Right cardiac atrium (tissue), 5 donors: ENCODE measurements at regions of chr1 and their contacts with region 1.

Region 1: GRCh38 chr1:114002492-114003239 is 23.4 kb downstream of the OLFML3 start:
- DNase-seq: peak; percentile 39 to 63 (median 55)
- ATAC-seq: peak; percentile 78 to 79
- H3K4me3 ChIP-seq: no peak overlapping the region
- H3K27ac ChIP-seq: no peak overlapping the region
- H3K4me1 ChIP-seq: peaks cover 2% of the 10 kb centered on the region
- H3K27me3 ChIP-seq: no peaks in the 10 kb centered on the region

Region 2: DNA sequence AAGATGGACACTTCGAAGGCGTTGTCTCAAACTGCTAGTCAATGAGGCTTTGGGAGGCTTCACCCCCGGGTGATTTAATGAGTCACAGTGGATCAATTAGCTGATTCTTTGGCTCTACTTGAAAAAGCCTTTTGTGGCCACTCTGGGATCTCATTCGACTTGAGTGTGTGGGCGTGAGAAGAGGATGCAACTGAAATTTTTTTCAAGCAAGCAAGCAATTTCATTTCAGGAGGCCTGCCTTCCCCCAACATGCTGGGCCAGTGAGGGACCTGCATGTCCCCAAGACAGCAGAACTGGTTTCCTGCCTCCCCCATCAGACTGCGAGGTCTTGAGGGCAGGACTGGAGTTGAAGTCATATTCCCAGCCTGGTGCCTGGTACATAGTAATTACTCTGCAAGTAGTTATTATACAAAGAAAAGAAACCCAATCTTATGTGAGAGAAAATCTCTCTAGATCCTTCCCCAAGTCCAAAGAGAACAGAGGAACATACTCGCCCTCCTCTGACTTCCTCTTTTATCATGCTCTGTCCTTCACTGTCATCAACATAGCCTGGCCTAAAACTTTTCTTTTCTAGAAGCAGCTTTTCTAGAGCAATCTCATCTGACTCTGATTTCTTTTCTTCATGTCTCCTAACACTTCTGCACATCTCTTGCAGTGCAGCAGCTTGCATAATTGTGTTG is 128.3 kb after region 1 on chr1:
- intact Hi-C with region 1: loop called in 1 of 4 experiments (anchors 10 kb)
- DNase-seq: no peak
- ATAC-seq: no peak
- H3K4me3 ChIP-seq: no peak overlapping the region
- H3K27ac ChIP-seq: no peak overlapping the region
- H3K4me1 ChIP-seq: no peaks in the 10 kb centered on the region
- H3K27me3 ChIP-seq: no peaks in the 10 kb centered on the region